Dendritic cell treated with granulocyte-macrophage colony-stimulating factor and Interleukin-4, amounts not matched to agents 40 ng/mL and 50 ng/mL, for 4 days (primary cell): ENCODE measurements at regions of chr3 and their contacts with region 1.

Region 1: DNA sequence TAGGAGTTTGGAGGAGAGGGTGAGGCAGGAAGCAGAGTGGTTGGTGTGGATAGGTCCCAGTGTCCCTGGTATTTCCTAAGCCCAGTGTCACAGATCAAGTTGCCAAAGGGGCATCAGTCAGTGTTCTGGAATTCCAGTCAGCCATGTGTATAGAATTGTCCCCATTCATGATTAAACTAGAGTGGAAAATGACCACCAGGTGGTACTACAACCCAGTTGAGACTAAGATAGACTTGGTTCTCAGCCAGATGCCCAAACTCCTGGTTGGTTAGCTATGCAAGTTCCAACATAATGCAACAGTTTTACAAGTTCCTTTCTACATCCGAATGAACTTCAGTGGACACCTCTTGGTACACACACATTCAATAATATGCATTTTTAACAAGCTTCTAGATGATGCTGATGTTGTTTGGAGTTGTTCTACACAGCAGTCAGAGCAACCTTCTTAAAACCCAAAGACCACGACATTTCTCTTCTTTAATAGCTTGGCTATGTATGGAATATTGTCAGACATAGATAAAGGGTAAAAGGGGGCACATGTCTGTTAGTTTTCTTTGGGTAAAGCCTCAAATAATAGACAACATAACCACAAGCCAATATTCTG is 8.4 kb upstream of the ATR start:
- H3K4me3 Mint-ChIP-seq: no peak overlapping the region
- H3K27ac Mint-ChIP-seq: no peak overlapping the region
- H3K4me1 Mint-ChIP-seq: no peaks in the 10 kb centered on the region
- H3K27me3 Mint-ChIP-seq: peaks cover 5% of the 10 kb centered on the region

Region 2: GRCh38 chr3:142618917-142619461 is 32.1 kb after region 1 on chr3:
- intact Hi-C with region 1: no loop called
- H3K4me3 Mint-ChIP-seq: no peak overlapping the region
- H3K27ac Mint-ChIP-seq: no peak overlapping the region
- H3K4me1 Mint-ChIP-seq: no peaks in the 10 kb centered on the region
- H3K27me3 Mint-ChIP-seq: no peaks in the 10 kb centered on the region

Region 3: GRCh38 chr3:142680710-142681109 is 93.8 kb after region 1 on chr3:
- intact Hi-C with region 1: loop called (anchors 5 kb)
- H3K4me3 Mint-ChIP-seq: no peak overlapping the region
- H3K27ac Mint-ChIP-seq: no peak overlapping the region
- H3K4me1 Mint-ChIP-seq: no peaks in the 10 kb centered on the region
- H3K27me3 Mint-ChIP-seq: no peaks in the 10 kb centered on the region

Region 4: GRCh38 chr3:142754494-142754893 is 167.6 kb after region 1 on chr3:
- intact Hi-C with region 1: no loop called
- H3K4me3 Mint-ChIP-seq: no peak overlapping the region
- H3K27ac Mint-ChIP-seq: no peak overlapping the region
- H3K4me1 Mint-ChIP-seq: no peaks in the 10 kb centered on the region
- H3K27me3 Mint-ChIP-seq: no peaks in the 10 kb centered on the region

Region 5: GRCh38 chr3:142828703-142829305 is 241.9 kb after region 1 on chr3:
- intact Hi-C with region 1: loop called (anchors 5 kb)
- H3K4me3 Mint-ChIP-seq: no peak overlapping the region
- H3K27ac Mint-ChIP-seq: no peak overlapping the region
- H3K4me1 Mint-ChIP-seq: no peaks in the 10 kb centered on the region
- H3K27me3 Mint-ChIP-seq: no peaks in the 10 kb centered on the region

Region 6: DNA sequence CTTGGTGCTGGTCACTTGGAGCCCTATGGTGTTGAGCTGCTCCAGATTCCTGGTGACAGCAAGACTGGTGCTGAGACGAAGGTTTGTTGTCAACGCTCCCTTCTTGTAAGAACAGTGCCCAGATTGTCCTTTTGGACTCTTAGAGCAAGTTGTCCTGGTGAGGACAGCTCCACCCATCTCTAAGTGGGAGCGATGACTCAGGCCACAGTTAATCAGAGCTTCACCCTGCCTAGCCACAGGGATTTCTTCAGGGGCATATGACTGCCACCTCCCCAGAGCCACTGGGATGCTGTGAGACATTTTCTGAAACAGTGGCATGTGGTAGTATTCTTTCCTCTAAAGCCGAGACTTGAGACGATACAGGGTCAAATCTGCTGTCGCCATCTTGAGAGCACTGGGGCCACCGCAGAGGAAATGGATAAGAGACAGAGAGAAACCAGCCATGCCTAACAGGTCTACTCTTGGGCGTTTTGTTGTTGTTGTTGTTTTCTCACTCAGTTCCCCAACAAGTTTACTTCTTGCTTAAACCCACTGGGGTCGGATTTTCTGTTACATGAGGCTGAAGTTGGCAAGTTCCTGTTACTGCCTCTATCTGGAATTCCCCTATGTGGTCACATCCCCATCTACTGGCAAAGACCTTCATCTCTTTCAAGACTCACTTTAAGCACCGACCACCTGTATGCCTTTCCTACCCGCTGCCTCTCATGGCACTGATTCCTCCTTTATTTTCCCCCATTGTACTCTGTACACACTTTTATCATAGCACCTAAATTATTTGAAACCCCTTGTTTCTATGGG is 317.9 kb after region 1 on chr3:
- intact Hi-C with region 1: loop called (anchors 5 kb)
- H3K4me3 Mint-ChIP-seq: no peak overlapping the region
- H3K27ac Mint-ChIP-seq: peak overlapping the region; percentile 7
- H3K4me1 Mint-ChIP-seq: peaks cover 14% of the 10 kb centered on the region
- H3K27me3 Mint-ChIP-seq: no peaks in the 10 kb centered on the region

Region 7: DNA sequence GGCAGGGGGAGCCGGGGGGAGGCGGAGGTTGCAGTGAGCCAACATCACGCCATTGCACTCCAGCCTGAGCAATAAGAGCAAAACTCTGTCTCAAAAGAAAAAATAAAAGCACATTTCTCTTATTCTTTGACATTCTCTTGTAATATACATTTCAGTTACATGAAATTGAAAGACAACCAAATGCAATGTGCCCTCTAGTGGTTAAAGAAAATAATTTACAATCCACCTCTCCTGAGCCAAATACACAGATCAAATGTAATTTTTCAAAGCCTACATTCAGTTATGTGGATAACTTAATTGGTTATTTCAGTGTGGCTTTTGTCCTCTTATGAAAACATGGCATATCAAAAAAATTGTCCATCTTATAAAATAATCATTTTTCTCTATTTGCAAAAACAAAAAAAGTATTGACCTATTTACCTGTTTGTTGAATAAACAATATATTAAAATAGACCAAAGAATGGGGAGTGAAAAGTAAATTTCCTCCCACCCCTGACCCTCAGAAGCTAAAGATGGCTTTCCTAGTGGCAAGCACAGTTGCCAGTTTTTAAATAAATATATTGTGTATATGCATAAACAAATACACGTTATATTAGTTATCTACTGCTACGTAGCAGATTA is 400.3 kb after region 1 on chr3:
- intact Hi-C with region 1: loop called (anchors 5 kb)
- H3K4me3 Mint-ChIP-seq: no peak overlapping the region
- H3K27ac Mint-ChIP-seq: no peak overlapping the region
- H3K4me1 Mint-ChIP-seq: no peaks in the 10 kb centered on the region
- H3K27me3 Mint-ChIP-seq: no peaks in the 10 kb centered on the region